Activated B cell treated with CpG ODN at 0.5 μM for 24 hours (primary cell): ENCODE measurements at regions of chr5 and their contacts with region 1.

Region 1: GRCh38 chr5:68406767-68407241 is 191.2 kb downstream of the PIK3R1 start:
- DNase-seq: no peak
- ATAC-seq: peak; percentile 72
- H3K4me3 Mint-ChIP-seq: no peak overlapping the region
- H3K27ac Mint-ChIP-seq: no peak overlapping the region
- H3K4me1 Mint-ChIP-seq: peaks cover 24% of the 10 kb centered on the region
- H3K27me3 Mint-ChIP-seq: no peaks in the 10 kb centered on the region
- CTCF ChIP-seq: no peak

Region 2: GRCh38 chr5:66503203-66503789 is 1903.5 kb before region 1 on chr5:
- CTCF ChIA-PET with region 1: no interaction called
- POLR2A ChIA-PET with region 1: interaction called, 14 read pairs
- intact Hi-C with region 1: no loop called
- DNase-seq: no peak
- ATAC-seq: no peak
- H3K4me3 Mint-ChIP-seq: no peak overlapping the region
- H3K27ac Mint-ChIP-seq: no peak overlapping the region
- H3K4me1 Mint-ChIP-seq: no peaks in the 10 kb centered on the region
- H3K27me3 Mint-ChIP-seq: no peaks in the 10 kb centered on the region
- CTCF ChIP-seq: no peak

Region 3: DNA sequence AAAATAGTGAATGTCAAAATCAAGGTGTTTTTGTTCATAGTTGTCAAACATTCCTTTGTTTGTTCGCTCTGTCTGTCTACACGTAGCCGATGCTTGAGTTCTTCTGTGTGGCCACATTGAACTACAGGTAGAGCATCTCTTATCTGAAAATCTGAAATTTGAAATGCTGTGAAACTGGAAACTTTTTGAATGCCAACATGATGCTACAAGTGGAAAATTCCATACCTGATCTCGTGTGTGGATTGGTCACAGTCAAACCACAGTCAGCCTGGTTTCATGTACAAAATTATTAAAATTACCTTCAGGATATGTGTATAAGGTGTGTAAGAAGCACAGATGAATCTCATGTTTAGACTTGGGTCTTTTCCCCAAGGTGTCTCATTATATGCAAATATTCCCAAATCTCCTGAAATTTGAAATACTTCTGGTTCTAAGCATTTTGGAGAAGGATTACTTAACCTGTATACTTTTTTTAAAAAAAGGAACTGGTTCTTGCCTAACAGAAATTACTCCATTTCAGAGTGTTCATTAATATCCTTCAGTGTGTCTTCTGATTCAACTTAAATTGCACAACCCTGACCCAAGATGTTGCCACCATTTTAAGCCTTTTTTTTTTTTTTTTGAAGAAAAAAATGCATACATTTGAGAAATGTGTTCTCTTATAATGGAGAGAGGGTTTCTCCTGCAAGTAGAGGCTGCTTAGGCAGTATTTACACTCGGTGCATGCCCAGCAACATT is 1556.3 kb before region 1 on chr5:
- CTCF ChIA-PET with region 1: no interaction called
- POLR2A ChIA-PET with region 1: no interaction called
- intact Hi-C with region 1: no loop called
- DNase-seq: no peak
- ATAC-seq: no peak
- H3K4me3 Mint-ChIP-seq: no peak overlapping the region
- H3K27ac Mint-ChIP-seq: no peak overlapping the region
- H3K4me1 Mint-ChIP-seq: no peaks in the 10 kb centered on the region
- H3K27me3 Mint-ChIP-seq: peaks cover 7% of the 10 kb centered on the region
- CTCF ChIP-seq: no peak

Region 4: GRCh38 chr5:67648201-67648671 is 758.6 kb before region 1 on chr5:
- CTCF ChIA-PET with region 1: no interaction called
- POLR2A ChIA-PET with region 1: no interaction called
- intact Hi-C with region 1: no loop called
- DNase-seq: no peak
- ATAC-seq: no peak
- H3K4me3 Mint-ChIP-seq: no peak overlapping the region
- H3K27ac Mint-ChIP-seq: no peak overlapping the region
- H3K4me1 Mint-ChIP-seq: no peaks in the 10 kb centered on the region
- H3K27me3 Mint-ChIP-seq: no peaks in the 10 kb centered on the region
- CTCF ChIP-seq: no peak

Region 5: GRCh38 chr5:68331192-68332079 is 75.4 kb before region 1 on chr5:
- CTCF ChIA-PET with region 1: no interaction called
- POLR2A ChIA-PET with region 1: no interaction called
- intact Hi-C with region 1: loop called (anchors 5 kb)
- DNase-seq: no peak
- ATAC-seq: peak; percentile 50
- H3K4me3 Mint-ChIP-seq: peak overlapping the region; percentile 1
- H3K27ac Mint-ChIP-seq: peak overlapping the region; percentile 4
- H3K4me1 Mint-ChIP-seq: peaks cover 24% of the 10 kb centered on the region
- H3K27me3 Mint-ChIP-seq: no peaks in the 10 kb centered on the region
- CTCF ChIP-seq: no peak

Region 6: GRCh38 chr5:68424799-68425537 is 18.2 kb after region 1 on chr5:
- CTCF ChIA-PET with region 1: no interaction called
- POLR2A ChIA-PET with region 1: no interaction called
- intact Hi-C with region 1: no loop called
- DNase-seq: no peak
- ATAC-seq: peak; percentile 25
- H3K4me3 Mint-ChIP-seq: no peak overlapping the region
- H3K27ac Mint-ChIP-seq: no peak overlapping the region
- H3K4me1 Mint-ChIP-seq: peaks cover 8% of the 10 kb centered on the region
- H3K27me3 Mint-ChIP-seq: peaks cover 2% of the 10 kb centered on the region
- CTCF ChIP-seq: no peak